ENCODE measurements at regions of chr6 and their contacts with region 1.

Region 1: DNA sequence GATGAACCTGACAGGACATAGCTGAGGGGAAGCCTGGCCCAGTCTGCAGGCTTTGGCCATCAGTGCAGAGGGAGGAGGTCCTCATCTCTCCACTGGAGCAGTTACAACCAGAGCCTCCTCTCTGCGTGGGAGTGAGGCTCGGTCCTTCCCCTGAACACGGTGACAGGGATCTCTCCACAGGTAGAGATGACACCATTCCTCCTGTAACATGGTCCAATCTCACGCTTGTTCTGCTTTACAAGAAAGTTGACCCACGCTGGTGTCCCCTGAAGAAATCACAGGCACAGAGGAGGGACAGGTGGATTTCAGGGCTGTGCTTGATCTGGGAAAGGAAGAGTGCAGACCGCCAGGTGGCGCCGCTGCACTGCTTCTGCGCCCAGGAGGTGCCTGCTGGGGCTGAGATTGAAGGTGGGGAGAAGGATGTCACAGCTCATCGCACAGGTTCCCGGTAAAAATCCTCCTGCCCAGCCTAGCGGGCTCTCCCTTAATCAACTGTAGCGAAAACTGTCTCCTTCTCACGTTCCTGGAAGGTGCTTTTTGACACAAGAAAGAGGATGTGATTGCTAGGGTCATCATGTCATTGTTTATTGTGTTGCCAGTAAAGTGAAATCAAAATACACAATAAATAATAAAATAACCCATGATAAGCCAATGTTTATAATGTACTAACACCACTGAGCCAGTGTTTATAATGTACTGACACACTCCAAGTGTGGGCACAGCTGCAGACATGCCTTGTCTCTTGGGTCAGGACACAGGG is 20.4 kb downstream of the HLA-G start:
- DNase-seq: peak; percentile 53 to 94 (median 80)
- ATAC-seq: peak; percentile 91 to 99 (median 96)
- H3K4me3 ChIP-seq: no peak overlapping the region
- H3K27ac ChIP-seq: no peak overlapping the region
- H3K4me1 ChIP-seq: no peaks in the 10 kb centered on the region
- H3K27me3 ChIP-seq: peaks cover 0 to 20% (median 4%) of the 10 kb centered on the region in 4 donors
- CTCF ChIP-seq: peak; percentile 66 to 87 (median 78)

Region 2: DNA sequence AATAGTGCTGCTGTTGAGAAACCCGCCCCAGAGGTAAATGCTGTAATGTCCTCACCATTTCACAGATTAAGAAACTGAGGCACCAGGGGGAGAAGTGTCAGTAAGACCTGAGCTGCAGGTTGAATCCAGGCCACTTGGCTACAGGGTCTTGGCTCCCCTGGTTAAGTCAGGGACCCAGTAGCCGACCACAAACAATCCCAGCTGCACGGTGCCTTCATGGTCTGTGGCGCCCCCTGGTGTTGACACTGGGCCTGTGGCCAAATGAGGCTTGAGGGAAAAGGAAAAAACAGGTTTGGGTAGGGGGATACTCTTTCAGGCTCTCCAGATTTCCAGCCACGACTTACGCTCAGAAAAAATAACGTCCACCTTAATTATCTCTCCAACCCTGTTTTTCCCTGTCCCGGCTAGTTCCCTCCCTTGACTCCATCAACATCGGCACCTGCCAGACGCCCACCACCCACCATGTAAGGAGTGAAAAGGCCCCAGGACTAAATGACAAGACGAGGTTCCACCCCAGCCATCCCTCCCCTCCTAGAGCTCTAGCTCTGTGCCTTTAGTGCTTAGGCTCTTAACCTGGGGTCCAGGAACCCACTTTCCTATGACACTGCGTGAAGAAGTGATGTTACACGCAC is 165.4 kb after region 1 on chr6:
- intact Hi-C with region 1: loop called (anchors 2 to 10 kb)
- DNase-seq: peak in 1 of 6 donors; percentile 32
- ATAC-seq: peak; percentile 61 to 82 (median 80)
- H3K4me3 ChIP-seq: no peak overlapping the region
- H3K27ac ChIP-seq: no peak overlapping the region
- H3K4me1 ChIP-seq: no peaks in the 10 kb centered on the region
- H3K27me3 ChIP-seq: no peaks in the 10 kb centered on the region
- CTCF ChIP-seq: peak; percentile 74 to 94 (median 84)

Region 3: DNA sequence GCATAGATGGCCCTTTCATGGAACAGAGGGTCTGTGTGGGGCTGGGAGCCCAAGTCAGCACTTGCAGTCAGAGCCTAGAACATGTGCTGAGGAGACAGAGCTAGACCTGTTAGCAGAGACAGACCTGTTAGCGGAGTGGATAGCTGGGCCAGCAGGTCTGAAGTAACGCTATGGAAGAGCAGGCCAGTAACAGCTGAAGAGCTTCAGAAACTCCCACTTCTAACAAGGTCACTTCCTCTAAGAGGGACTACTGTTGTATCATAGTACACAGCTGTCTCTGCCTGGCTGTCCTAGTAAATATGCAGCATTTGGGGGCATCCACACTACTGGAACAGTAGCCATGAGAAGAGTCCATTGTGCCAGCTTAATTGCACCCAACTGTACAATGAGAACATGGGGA is 171.8 kb after region 1 on chr6:
- intact Hi-C with region 1: loop called in 2 of 3 experiments (anchors 5 to 10 kb)
- DNase-seq: no peak
- ATAC-seq: no peak
- H3K4me3 ChIP-seq: no peak overlapping the region
- H3K27ac ChIP-seq: no peak overlapping the region
- H3K4me1 ChIP-seq: no peaks in the 10 kb centered on the region
- H3K27me3 ChIP-seq: no peaks in the 10 kb centered on the region
- CTCF ChIP-seq: no peak